ENCODE measurements at regions of chr11 and their contacts with region 1.

Region 1: DNA sequence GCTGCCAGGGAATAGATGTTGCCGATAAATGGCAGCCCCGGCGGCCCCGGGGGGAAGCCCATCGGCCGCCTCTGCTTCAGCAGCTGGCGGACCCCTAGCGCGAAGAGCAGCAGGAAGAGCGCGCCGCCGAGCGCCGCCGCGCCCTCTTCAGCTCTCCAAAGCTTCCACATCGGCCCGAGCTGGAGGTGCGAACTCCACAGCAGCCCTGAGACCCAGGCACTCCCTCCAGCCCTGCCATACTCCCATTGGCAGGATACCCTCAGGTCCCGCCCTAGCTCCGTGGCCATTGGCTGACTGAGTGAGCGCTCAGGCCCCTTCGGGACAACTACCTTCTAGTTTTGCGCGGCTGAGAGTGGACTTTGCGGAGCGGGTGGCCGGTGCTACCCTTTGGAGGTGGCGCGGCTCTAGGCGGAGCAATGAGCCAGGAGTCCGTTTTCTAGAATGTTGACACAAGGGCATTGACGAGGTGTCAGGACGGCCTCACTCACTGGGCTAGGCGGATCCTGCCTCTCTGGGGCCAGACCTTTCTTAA is at the start of gene CYP2R1:
- DNase-seq: peak; percentile 95
- H3K4me3 Mint-ChIP-seq: peak within 1 kb of the TSS; percentile 86
- H3K27ac Mint-ChIP-seq: peak within 1 kb of the TSS; percentile 98
- H3K4me1 Mint-ChIP-seq: peaks cover 52% of the 10 kb centered on the region
- H3K27me3 Mint-ChIP-seq: no peaks in the 10 kb centered on the region
- total RNA-seq, gene CYP2R1: 12.0 to 12.6 TPM

Region 2: DNA sequence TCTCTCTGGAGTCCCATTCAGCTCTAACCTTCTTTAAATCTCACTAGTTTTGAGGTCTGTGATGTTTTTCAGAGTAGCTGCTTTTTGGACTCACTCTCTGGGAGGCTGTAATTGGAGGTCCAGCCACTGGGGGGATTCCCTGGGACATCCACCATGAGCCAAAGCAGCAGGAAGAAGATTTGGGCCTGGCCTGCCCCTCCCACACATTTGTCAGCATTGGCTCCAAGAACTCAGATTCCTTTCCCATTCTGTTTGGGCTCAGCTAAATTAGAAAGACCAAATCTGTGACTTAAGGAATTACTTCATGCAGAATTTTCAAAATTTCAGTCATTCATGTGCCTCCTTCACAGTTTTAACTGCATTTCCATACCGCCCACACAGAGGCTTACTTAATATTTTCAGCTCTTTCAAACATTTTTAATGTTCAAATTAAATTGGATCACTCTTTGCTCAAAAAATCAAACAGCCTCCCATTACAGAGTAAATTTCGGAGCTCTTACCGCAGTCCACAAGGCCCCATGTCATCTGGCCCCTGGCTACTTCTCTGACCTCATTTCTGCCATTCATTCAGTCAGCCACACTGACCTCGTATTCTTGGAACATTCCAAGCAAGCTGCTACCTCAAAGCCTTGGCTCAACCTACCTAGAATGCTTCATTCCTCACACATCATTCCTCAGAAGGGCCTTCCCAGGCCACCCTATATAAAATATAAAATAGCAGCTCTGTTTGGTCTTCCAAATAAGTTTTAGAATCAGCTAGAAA is 478.6 kb before region 1 on chr11:
- CTCF ChIA-PET with region 1: no interaction called
- intact Hi-C with region 1: loop called (anchors 1 kb)
- DNase-seq: peak; percentile 41
- H3K4me3 Mint-ChIP-seq: no peak overlapping the region
- H3K27ac Mint-ChIP-seq: peak overlapping the region; percentile 20
- H3K4me1 Mint-ChIP-seq: peaks cover 36% of the 10 kb centered on the region
- H3K27me3 Mint-ChIP-seq: no peaks in the 10 kb centered on the region

Region 3: DNA sequence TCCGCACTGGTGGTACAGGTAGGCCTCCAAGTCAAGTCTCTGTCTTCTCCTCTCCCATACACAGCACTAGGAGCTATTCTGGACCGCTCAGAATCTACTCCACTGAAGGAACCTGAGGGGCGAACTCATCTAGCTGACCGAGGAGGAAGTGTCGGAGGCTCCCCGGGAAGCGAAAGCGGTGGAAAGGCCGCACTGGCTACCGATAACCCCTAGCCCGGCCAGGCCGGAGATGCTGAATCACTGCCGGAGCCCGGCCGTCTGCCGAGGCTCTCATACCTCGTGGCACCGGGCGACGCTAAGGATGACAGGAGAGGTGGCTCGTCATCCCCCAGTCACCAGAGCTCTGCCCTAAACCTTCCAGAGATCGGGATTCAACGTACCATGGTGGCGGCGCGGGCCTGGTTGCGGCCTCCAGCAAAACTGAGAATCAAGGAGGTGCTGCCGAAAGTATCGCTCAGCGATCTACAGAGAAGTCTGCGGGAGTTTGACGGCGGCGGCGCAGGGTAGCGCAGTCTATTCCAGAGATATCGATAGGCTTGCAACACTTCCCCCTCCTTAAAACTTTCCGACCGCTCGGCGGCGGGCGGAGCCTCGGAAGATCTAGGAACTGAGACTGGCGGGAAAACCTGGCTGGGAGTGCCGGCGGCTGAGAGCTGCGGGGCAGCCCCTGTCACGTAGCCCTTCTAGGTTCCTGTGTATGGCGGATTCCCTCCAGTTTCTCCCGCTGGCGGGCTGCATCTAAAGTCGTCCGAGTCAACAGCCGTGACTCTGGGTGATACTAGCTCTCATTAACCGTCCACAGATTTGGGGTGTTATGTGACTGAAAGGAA is 372.0 kb before region 1 on chr11 and contains the start of gene PSMA1:
- CTCF ChIA-PET with region 1: interaction called, 3 read pairs
- intact Hi-C with region 1: loop called (anchors 1 kb)
- DNase-seq: peak; percentile 98
- H3K4me3 Mint-ChIP-seq: peak within 1 kb of the TSS; percentile 96
- H3K27ac Mint-ChIP-seq: peak within 1 kb of the TSS; percentile 97
- H3K4me1 Mint-ChIP-seq: peaks cover 24% of the 10 kb centered on the region
- H3K27me3 Mint-ChIP-seq: no peaks in the 10 kb centered on the region
- total RNA-seq, gene PSMA1: 367 to 375 TPM

Region 4: GRCh38 chr11:14578541-14578956 is 313.6 kb before region 1 on chr11:
- CTCF ChIA-PET with region 1: no interaction called
- intact Hi-C with region 1: loop called (anchors 1 kb)
- DNase-seq: peak; percentile 67
- H3K4me3 Mint-ChIP-seq: peak overlapping the region; percentile 11
- H3K27ac Mint-ChIP-seq: peak overlapping the region; percentile 75
- H3K4me1 Mint-ChIP-seq: peaks cover 47% of the 10 kb centered on the region
- H3K27me3 Mint-ChIP-seq: no peaks in the 10 kb centered on the region

Region 5: GRCh38 chr11:14611939-14612338 is 280.2 kb before region 1 on chr11:
- CTCF ChIA-PET with region 1: no interaction called
- intact Hi-C with region 1: no loop called
- DNase-seq: peak; percentile 54
- H3K4me3 Mint-ChIP-seq: no peak overlapping the region
- H3K27ac Mint-ChIP-seq: peak overlapping the region; percentile 74
- H3K4me1 Mint-ChIP-seq: peaks cover 32% of the 10 kb centered on the region
- H3K27me3 Mint-ChIP-seq: no peaks in the 10 kb centered on the region

Region 6: DNA sequence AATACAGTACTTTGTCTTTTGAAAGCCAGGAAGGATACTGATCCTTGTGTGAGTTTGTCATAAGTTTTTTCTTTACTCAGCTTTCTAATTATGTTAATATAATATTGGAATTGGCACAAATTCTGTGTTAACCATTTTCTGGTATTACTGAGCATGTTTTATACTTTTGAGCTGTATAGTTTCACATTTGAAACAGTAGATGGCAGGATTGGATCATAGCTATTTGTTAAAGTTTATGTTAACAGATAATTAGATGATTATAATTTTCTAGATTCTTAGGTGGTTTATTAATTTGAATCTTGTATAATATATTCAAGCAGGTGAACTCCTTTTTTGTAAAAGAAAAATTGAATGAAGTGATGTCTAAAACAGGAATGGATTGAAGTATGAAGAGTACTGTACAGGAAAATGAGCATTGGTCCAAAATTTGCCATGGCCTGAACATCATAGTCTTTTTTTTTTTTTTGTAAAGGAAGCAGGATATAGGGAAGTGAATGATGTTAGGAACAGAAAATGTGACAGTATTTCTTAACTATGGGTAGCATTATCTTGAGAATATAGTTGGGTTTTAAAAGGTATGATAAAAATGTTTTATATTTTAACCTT is 102.1 kb before region 1 on chr11:
- CTCF ChIA-PET with region 1: interaction called, 10 read pairs
- intact Hi-C with region 1: no loop called
- DNase-seq: no peak
- H3K4me3 Mint-ChIP-seq: no peak overlapping the region
- H3K27ac Mint-ChIP-seq: no peak overlapping the region
- H3K4me1 Mint-ChIP-seq: peaks cover 6% of the 10 kb centered on the region
- H3K27me3 Mint-ChIP-seq: no peaks in the 10 kb centered on the region

Region 7: GRCh38 chr11:14861680-14862079 is 30.4 kb before region 1 on chr11:
- CTCF ChIA-PET with region 1: no interaction called
- intact Hi-C with region 1: no loop called
- DNase-seq: no peak
- H3K4me3 Mint-ChIP-seq: no peak overlapping the region
- H3K27ac Mint-ChIP-seq: no peak overlapping the region
- H3K4me1 Mint-ChIP-seq: peaks cover 17% of the 10 kb centered on the region
- H3K27me3 Mint-ChIP-seq: no peaks in the 10 kb centered on the region

Region 8: GRCh38 chr11:15053191-15053685 is 161.1 kb after region 1 on chr11:
- CTCF ChIA-PET with region 1: no interaction called
- intact Hi-C with region 1: loop called (anchors 1 kb)
- DNase-seq: peak; percentile 75
- H3K4me3 Mint-ChIP-seq: no peak overlapping the region
- H3K27ac Mint-ChIP-seq: peak overlapping the region; percentile 83
- H3K4me1 Mint-ChIP-seq: peaks cover 26% of the 10 kb centered on the region
- H3K27me3 Mint-ChIP-seq: peaks cover 2% of the 10 kb centered on the region